ENCODE measurements at regions of chr19 and their contacts with region 1.

Region 1: DNA sequence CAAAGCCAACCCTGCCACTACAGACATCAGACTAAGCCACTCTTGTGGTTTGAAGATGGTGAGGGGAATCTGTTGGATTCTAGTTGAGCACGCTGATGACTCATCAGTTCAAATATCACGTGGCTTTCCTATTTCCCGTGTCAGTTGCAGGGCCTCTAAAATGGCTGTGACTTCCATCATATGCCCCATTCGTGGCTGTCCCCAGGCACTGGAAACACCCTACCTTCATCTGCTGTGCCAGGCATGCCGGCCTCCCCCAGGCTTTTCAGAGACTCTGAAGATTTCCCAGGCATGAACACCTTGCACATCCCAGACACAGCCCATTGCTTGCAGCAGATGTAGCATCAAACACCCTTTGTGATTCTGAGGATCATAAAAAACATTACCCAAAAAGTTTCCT is 659.9 kb downstream of the UQCRFS1 start:
- DNase-seq: no peak
- ATAC-seq: no peak
- H3K4me3 ChIP-seq: no peak overlapping the region
- H3K4me3 Mint-ChIP-seq: no peak overlapping the region
- H3K27ac ChIP-seq: no peak overlapping the region
- H3K27ac Mint-ChIP-seq: peak overlapping the region in 1 of 9 donors; percentile 33
- H3K4me1 ChIP-seq: no peaks in the 10 kb centered on the region
- H3K4me1 Mint-ChIP-seq: peaks cover 0 to 24% (median 0%) of the 10 kb centered on the region in 7 donors
- H3K27me3 ChIP-seq: no peaks in the 10 kb centered on the region
- H3K27me3 Mint-ChIP-seq: no peaks in the 10 kb centered on the region

Region 2: DNA sequence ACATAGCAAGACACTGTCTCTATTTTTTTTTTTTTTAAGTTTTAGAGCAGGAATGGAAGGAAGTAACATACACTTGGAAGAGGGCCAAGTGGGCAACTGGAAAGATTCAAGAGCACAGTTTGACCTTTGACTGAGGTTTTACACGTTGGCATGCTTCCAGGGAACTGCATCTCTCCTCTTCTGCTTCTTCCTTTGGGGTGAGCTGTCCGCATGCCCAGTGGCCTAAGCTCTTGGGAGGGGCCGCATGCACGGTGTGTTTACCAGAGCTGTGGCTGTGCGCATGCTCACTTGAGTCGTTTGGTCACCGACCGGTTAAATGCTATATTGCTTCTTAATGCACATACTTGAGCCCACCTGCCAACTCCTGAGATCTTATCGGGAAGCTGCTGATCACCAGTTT is 67.7 kb before region 1 on chr19:
- CTCF ChIA-PET with region 1: no interaction called
- POLR2A ChIA-PET with region 1: no interaction called
- intact Hi-C with region 1: loop called in 1 of 2 experiments (anchors 5 kb)
- DNase-seq: no peak
- ATAC-seq: no peak
- H3K4me3 ChIP-seq: no peak overlapping the region
- H3K4me3 Mint-ChIP-seq: no peak overlapping the region
- H3K27ac ChIP-seq: no peak overlapping the region
- H3K27ac Mint-ChIP-seq: no peak overlapping the region
- H3K4me1 ChIP-seq: no peaks in the 10 kb centered on the region
- H3K4me1 Mint-ChIP-seq: peaks cover 0 to 32% (median 11%) of the 10 kb centered on the region in 7 donors
- H3K27me3 ChIP-seq: no peaks in the 10 kb centered on the region
- H3K27me3 Mint-ChIP-seq: peaks cover 0 to 8% (median 3%) of the 10 kb centered on the region in 5 donors

Region 3: DNA sequence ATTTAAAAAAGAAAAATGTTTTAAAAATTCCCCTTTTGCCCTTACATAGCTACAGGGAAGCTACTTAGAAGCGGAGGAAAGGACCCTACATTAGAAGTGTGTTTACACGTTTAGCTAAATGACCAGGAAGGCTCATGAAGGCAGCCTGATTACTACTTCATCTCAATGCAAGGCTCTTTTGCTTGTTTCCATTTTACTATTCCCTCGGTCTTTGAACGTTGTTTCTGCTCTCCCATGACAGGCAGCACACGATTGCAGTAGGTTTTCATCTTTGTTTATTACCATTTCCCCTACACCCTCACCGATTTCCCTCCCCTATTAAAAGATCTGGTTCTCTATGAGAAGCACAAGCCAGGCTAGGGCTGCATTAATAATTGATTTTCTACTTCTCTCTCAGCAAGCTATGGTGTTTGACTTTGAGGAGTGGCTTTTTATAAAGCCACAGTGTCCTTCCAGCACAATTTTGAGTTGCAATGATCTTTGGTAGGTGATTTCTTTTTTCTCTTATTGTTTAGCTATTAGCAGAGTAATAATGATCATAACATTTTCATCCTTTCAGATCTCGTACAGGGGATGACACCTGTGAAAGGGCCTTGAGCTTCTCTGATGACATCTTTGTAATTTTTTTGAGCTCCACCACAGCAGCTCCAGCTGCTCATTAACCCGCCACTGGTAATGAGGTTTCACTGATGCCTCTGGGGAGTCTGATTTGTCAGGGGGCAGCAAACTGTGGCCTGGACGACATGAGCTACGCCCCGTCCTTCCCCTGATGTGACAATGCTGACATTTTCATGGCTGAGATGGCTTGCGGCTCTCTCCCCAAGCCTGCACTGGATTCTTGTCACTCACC is 10.4 kb before region 1 on chr19:
- CTCF ChIA-PET with region 1: no interaction called
- POLR2A ChIA-PET with region 1: no interaction called
- intact Hi-C with region 1: no loop called
- DNase-seq: no peak
- ATAC-seq: no peak
- H3K4me3 ChIP-seq: no peak overlapping the region
- H3K4me3 Mint-ChIP-seq: no peak overlapping the region
- H3K27ac ChIP-seq: no peak overlapping the region
- H3K27ac Mint-ChIP-seq: no peak overlapping the region
- H3K4me1 ChIP-seq: no peaks in the 10 kb centered on the region
- H3K4me1 Mint-ChIP-seq: peaks cover 0 to 4% (median 0%) of the 10 kb centered on the region in 7 donors
- H3K27me3 ChIP-seq: no peaks in the 10 kb centered on the region
- H3K27me3 Mint-ChIP-seq: peaks cover 0 to 8% (median 0%) of the 10 kb centered on the region in 5 donors